HAP-1 (cell line): ENCODE measurements at regions of chr10 and their contacts with region 1.

Region 1: GRCh38 chr10:72223743-72224101 is 7.6 kb upstream of the ASCC1 start:
- DNase-seq: no peak
- H3K4me3 ChIP-seq: no peak overlapping the region
- H3K4me1 ChIP-seq: 0 out of 2 replicates have a peak, but pooled peaks cover 2% of the 10 kb centered on the region
- H3K27me3 ChIP-seq: no peaks in the 10 kb centered on the region

Region 2: DNA sequence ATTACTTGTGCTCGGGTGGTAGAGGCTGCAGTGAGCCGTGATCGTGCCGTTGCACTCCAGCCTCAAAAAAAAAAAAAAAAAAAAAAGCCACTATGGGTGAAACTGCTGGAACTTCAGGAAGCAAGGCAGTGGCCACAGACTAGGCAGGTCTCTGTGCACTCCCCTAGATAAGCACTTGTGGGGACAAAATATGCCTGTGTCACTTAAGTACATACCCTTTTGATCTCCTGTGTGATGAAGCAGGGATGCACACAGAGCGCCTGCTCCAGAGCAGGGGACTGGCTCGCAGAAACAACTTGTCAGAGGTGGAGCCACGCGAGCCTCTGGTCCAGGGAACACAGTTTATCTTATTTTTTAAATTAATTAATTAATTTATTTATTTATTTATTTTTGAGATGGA is 329.8 kb before region 1 on chr10:
- in situ Hi-C with region 1: loop called (anchors 10 kb)
- DNase-seq: no peak
- H3K4me3 ChIP-seq: no peak overlapping the region
- H3K4me1 ChIP-seq: peaks cover 5% of the 10 kb centered on the region
- H3K27me3 ChIP-seq: no peaks in the 10 kb centered on the region

Region 3: DNA sequence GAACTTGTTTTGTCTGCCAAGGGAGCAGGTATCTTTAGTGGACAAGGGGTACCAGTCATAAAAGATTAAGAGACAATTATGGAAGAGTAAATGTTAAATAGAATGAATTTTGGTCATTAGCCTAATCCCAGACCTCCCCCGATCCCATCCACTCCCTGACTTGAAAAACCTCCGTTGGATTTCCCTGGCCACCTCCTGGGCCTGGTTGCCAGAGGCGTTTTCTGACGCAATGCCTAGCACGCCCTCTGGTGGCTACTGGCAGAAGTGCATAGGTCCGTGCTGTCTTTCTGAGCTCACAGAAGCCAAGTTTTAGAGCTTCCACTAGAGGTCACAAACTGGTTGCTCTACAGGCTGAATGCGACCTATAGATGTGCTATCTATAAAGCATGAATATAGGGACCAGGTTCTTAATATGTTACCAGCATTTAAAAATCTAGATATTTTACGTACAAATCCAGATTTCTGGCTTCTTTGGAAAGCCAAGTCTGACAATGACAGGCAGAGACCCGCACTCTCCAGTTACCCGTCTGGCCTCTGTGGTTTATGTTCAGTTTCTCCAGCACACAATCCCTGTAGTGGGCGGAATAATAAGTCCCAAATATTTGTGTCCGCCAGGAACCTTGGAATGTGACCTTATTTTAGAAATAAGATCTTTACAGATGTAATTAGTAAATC is 175.1 kb before region 1 on chr10:
- in situ Hi-C with region 1: loop called (anchors 5 kb)
- DNase-seq: peak; percentile 88 to 92
- H3K4me3 ChIP-seq: no peak overlapping the region
- H3K4me1 ChIP-seq: peaks cover 4% of the 10 kb centered on the region
- H3K27me3 ChIP-seq: no peaks in the 10 kb centered on the region